Caco-2 (cell line): ENCODE measurements at regions of chr1 and their contacts with region 1.

Region 1: DNA sequence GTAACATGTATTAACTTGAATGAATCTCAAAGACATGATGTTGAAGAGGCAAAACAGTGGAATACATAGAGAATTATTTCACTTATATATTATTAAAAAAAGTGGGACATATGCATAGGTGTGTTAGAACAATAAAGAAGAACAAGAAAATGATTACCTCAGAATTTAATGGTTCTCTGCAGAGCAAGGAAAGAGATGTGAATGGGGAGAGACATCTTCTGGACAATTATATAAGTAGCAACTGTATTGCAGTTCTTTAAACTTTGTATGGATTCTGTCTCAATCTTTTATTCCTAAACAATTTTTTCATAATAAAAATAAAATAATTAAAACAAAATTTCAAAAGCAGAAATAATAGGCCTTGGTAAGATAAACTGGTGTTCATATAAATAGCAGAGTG is 674.9 kb upstream of the ADGRL4 start:
- DNase-seq: no peak
- H3K4me3 ChIP-seq: no peak overlapping the region
- H3K4me3 Mint-ChIP-seq: no peak overlapping the region
- H3K27ac Mint-ChIP-seq: no peak overlapping the region
- H3K4me1 ChIP-seq: no peaks in the 10 kb centered on the region
- H3K4me1 Mint-ChIP-seq: no peaks in the 10 kb centered on the region
- H3K27me3 ChIP-seq: no peaks in the 10 kb centered on the region
- H3K27me3 Mint-ChIP-seq: no peaks in the 10 kb centered on the region
- CTCF ChIP-seq: no peak

Region 2: GRCh38 chr1:79497193-79497773 is 184.1 kb before region 1 on chr1:
- CTCF ChIA-PET with region 1: no interaction called
- POLR2A ChIA-PET with region 1: no interaction called
- intact Hi-C with region 1: loop called (anchors 1 kb)
- DNase-seq: peak in 1 of 2 experiments; percentile 48
- H3K4me3 ChIP-seq: no peak overlapping the region
- H3K4me3 Mint-ChIP-seq: no peak overlapping the region
- H3K27ac Mint-ChIP-seq: no peak overlapping the region
- H3K4me1 ChIP-seq: no peaks in the 10 kb centered on the region
- H3K4me1 Mint-ChIP-seq: no peaks in the 10 kb centered on the region
- H3K27me3 ChIP-seq: no peaks in the 10 kb centered on the region
- H3K27me3 Mint-ChIP-seq: no peaks in the 10 kb centered on the region
- CTCF ChIP-seq: peak; percentile 74 to 77

Region 3: DNA sequence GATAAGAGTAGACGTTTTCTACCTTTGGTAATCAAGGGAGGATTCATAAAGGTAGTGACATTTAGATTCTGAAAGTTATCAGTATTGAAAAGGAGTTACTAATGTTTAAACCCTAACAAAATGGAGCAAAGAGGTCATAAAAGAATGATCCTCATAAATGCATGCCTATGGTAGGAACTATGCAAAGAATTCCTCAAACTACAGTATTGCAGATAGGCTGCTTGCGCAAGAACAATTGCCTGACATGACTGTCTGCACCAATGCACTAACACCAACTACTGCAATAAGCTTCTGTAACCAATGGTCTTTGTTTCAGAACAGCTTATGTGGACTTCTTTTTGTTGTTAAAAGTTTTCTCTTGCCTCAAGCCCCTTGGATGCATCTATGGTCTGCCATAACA is 77.5 kb before region 1 on chr1:
- CTCF ChIA-PET with region 1: no interaction called
- POLR2A ChIA-PET with region 1: no interaction called
- intact Hi-C with region 1: no loop called
- DNase-seq: peak; percentile 52 to 71
- H3K4me3 ChIP-seq: no peak overlapping the region
- H3K4me3 Mint-ChIP-seq: peak overlapping the region; percentile 23
- H3K27ac Mint-ChIP-seq: peak overlapping the region; percentile 65
- H3K4me1 ChIP-seq: peaks cover 23% of the 10 kb centered on the region
- H3K4me1 Mint-ChIP-seq: peaks cover 25% of the 10 kb centered on the region
- H3K27me3 ChIP-seq: no peaks in the 10 kb centered on the region
- H3K27me3 Mint-ChIP-seq: no peaks in the 10 kb centered on the region
- CTCF ChIP-seq: no peak